ENCODE measurements at regions of chr4 and their contacts with region 1.

Region 1: DNA sequence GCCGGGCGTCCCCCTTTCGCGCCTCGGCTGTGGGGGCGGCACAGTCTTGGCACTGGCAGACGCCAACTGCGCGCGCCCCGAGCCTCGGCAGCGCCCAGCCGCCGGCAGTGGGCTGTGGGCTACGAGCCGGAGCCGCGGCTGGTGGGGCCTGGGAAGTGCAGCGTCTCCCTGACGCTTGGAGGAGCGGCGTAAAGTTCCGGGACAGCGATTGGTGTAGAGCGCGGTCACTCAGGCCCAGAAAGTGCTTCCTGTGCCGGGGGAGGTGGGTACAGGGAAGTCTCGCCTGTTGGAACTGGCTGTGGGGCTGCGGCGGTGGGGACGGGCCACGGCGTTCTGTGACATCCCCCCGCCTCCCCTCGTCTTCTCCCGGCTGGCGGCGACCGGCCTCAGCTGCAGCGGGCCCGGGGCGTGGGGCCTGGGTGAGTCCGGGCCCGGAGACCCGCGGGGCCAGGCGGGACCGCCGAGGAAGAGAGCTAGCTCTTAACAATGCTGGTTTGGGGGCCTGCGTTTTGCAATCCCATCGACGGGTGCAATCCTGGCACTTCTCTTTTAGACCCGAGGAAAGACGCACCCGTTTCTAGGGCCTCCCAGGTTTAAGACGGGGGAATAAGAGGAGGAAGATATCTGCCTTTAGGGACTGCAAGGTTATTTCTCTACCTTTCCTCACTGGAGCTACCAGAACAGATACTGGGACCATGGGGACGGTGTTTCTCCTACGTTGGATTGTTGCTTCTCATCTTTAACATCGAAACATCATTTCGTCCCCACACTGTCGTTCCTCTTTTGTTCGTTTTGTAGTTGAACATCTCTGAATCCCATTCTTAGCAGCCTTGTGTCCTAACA is at the starts of genes RWDD4 and TRAPPC11:
- DNase-seq: peak; percentile 91 to 98
- H3K4me3 ChIP-seq: peak within 1 kb of the TSS; percentile 71 to 98
- H3K27ac ChIP-seq: peak within 1 kb of the TSS; percentile 89 to 90
- H3K4me1 ChIP-seq: peaks cover 3 to 14% of the 10 kb centered on the region in 2 donors
- H3K27me3 ChIP-seq: no peaks in the 10 kb centered on the region
- CTCF ChIP-seq: peak; percentile 38 to 45 (median 45)
- total RNA-seq, gene RWDD4: 38.6 TPM
- total RNA-seq, gene TRAPPC11: 124 TPM

Region 2: GRCh38 chr4:183214912-183215488 is 444.2 kb before region 1 on chr4:
- intact Hi-C with region 1: no loop called
- DNase-seq: no peak
- H3K4me3 ChIP-seq: no peak overlapping the region
- H3K27ac ChIP-seq: no peak overlapping the region
- H3K4me1 ChIP-seq: no peaks in the 10 kb centered on the region
- H3K27me3 ChIP-seq: no peaks in the 10 kb centered on the region
- CTCF ChIP-seq: no peak

Region 3: GRCh38 chr4:183241322-183241640 is 418.0 kb before region 1 on chr4:
- intact Hi-C with region 1: no loop called
- DNase-seq: no peak
- H3K4me3 ChIP-seq: no peak overlapping the region
- H3K27ac ChIP-seq: no peak overlapping the region
- H3K4me1 ChIP-seq: no peaks in the 10 kb centered on the region
- H3K27me3 ChIP-seq: no peaks in the 10 kb centered on the region
- CTCF ChIP-seq: no peak

Region 4: DNA sequence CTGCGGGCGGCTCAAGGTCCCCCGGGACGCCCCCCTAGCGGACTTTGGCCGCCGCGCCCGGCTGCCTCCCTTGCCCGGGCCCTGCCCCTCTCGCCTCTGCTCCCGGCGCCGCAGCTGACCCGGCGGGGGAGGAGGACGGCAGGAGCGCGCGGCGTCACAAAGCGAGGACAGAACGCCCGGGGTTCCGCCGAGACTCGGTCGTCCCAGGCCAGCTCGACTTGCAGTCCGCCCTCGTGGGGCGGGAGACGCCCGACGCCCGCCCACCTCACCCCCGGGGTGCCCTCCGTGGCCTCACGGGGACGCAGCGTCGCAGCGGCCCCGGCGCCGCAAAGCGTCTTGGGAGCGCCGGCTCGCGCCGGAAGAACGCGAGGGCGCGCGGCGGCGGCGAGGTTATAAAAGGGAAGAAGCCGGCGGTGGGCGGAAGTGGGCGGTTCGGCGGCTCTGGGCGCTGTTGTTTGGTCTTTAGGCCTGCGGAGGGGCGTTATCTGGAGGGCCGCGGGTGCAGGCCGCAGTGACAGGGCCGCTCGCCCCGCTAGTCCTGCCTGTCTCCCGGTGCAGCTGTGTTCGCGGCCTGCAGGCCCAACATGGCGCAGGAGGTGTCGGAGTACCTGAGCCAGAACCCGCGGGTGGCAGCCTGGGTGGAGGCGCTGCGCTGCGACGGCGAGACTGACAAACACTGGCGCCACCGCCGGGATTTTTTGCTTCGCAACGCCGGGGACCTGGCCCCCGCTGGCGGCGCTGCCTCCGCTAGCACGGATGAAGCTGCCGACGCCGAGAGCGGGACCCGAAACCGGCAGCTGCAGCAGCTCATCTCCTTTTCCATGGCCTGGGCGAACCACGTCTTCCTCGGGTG is 214.8 kb before region 1 on chr4 and contains the start of gene CDKN2AIP:
- intact Hi-C with region 1: loop called (anchors 2 kb)
- DNase-seq: peak; percentile 64 to 96
- H3K4me3 ChIP-seq: peak within 1 kb of the TSS; percentile 89 to 96
- H3K27ac ChIP-seq: peak within 1 kb of the TSS; percentile 95 to 99
- H3K4me1 ChIP-seq: peaks cover 12 to 30% of the 10 kb centered on the region in 2 donors
- H3K27me3 ChIP-seq: no peaks in the 10 kb centered on the region
- CTCF ChIP-seq: peak in 1 of 3 experiments; percentile 17
- total RNA-seq, gene CDKN2AIP: 34.5 TPM

Region 5: DNA sequence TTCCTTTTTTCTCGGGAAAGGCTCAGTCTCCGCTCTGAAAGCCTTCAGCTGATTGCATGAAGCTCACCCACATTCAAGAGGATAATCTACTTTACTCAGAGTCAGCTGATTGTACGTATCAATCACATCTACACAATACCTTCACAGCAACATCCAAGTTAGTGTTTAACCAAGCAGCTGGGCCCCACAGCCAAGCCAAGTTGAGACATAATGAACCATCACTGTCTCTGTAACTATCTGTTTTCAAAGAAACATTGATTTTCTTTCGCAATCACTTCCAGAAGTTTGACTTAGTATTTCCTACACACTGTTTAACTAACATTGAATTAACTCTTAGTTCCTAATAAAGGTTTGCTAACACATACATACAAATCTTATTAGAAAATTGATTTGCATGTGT is 40.6 kb before region 1 on chr4:
- intact Hi-C with region 1: no loop called
- DNase-seq: no peak
- H3K4me3 ChIP-seq: no peak overlapping the region
- H3K27ac ChIP-seq: no peak overlapping the region
- H3K4me1 ChIP-seq: no peaks in the 10 kb centered on the region
- H3K27me3 ChIP-seq: no peaks in the 10 kb centered on the region
- CTCF ChIP-seq: no peak

Region 6: DNA sequence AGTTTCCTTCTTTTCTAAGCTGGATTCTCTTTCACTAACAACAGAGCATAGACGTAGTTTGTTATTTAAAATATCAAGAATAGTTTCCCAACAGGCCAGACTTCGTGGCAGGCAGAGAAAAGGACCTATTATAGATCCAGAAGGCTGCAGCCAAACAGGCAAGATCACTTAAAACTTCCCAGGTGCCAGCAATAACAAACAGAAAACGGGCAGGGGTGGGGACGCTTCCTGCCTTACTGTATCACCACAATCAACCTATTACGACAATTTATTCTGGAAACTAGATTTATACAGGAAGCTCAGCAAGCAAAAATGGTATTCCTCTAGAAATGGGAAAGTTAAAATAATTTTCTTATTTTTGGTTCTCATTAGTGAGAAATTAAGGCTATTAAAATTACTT is 22.3 kb before region 1 on chr4:
- intact Hi-C with region 1: loop called (anchors 2 kb)
- DNase-seq: peak in 1 of 2 donors; percentile 80
- H3K4me3 ChIP-seq: peak overlapping the region; percentile 29 to 56
- H3K27ac ChIP-seq: peak overlapping the region; percentile 77 to 79
- H3K4me1 ChIP-seq: peaks cover 0 to 22% of the 10 kb centered on the region in 2 donors
- H3K27me3 ChIP-seq: no peaks in the 10 kb centered on the region
- CTCF ChIP-seq: no peak